IMR-90 (cell line): ENCODE measurements at regions of chr1 and their contacts with region 1.

Region 1: GRCh38 chr1:63522891-63523728 is at the starts of genes EFCAB7 and ITGB3BP:
- DNase-seq: peak; percentile 96
- ATAC-seq: peak; percentile 94
- H3K4me3 ChIP-seq: peak within 1 kb of the TSS; percentile 66
- H3K27ac ChIP-seq: peak within 1 kb of the TSS; percentile 85
- H3K4me1 ChIP-seq: no peaks in the 10 kb centered on the region
- H3K27me3 ChIP-seq: no peaks in the 10 kb centered on the region
- CTCF ChIP-seq: no peak
- POLR2A ChIP-seq: no peak; the same call in 1 of the 2 replicates
- RAD21 ChIP-seq: no peak
- total RNA-seq, gene EFCAB7: 2.3 and 6.7 TPM in 2 replicates
- total RNA-seq, gene ITGB3BP: 8.1 and 15.8 TPM in 2 replicates

Region 2: GRCh38 chr1:63454269-63454668 is 68.8 kb before region 1 on chr1:
- CTCF ChIA-PET with region 1: no interaction called
- POLR2A ChIA-PET with region 1: no interaction called
- dilution Hi-C with region 1: no loop called
- in situ Hi-C with region 1: no loop called
- intact Hi-C with region 1: loop called (anchors 2 kb)
- DNase-seq: peak; percentile 43
- ATAC-seq: peak; percentile 69; the same call in 1 of the 2 replicates
- H3K4me3 ChIP-seq: no peak overlapping the region
- H3K27ac ChIP-seq: no peak overlapping the region
- H3K4me1 ChIP-seq: no peaks in the 10 kb centered on the region; the same call in 1 of the 2 replicates
- H3K27me3 ChIP-seq: no peaks in the 10 kb centered on the region
- CTCF ChIP-seq: peak; percentile 37
- POLR2A ChIP-seq: no peak
- RAD21 ChIP-seq: no peak